Astrocyte of the cerebellum (primary cell): ENCODE measurements at regions of chr20 and their contacts with region 1.

Region 1: GRCh38 chr20:49846206-49846807 is 33.7 kb downstream of the SLC9A8 start:
- DNase-seq: peak; percentile 43
- H3K4me3 ChIP-seq: no peak overlapping the region
- CTCF ChIP-seq: peak; percentile 59

Region 2: DNA sequence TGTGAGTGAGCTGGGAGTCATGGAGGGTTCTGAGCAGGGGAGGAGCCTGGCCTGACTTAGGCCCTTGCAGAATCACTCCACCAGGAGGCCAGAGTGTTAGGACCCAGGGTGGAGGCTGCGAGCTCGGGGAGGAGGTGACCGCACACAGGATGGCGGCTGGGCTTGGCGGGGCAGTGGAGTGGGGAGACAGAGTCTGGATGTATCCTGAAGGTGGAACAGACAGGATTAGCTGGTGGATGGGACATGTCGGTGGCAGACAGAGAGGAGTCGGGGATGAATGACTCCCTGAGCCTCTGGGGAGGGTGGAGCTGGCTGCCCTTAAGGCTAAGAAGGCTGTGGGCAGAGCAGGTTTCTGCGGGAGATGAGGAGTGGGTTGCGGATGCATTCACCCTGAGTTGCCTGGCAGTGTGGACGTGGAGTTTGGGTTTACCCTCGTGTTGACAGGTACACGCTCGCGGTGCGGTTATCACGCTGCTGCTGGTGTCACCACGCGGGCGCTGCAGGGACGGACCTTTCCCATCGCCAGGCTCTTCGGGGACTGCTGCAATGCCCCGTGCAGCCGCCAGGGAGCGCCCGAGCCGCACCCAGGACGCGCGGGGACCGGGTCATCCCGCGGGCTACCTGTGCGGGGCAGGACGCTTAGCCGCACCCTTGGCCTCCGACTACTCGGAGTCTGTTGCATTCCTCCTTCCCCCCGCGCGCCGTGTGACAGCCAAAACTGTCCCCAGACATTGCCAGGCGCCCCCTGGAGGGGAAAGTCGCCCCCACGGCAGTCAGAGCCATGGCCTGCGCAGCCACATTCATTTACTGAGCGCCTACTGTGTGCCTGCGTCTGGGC is 235.4 kb before region 1 on chr20:
- in situ Hi-C with region 1: loop called (anchors 25 kb)
- DNase-seq: no peak
- H3K4me3 ChIP-seq: no peak overlapping the region
- CTCF ChIP-seq: peak; percentile 96

Region 3: GRCh38 chr20:49641683-49642656 is 204.3 kb before region 1 on chr20:
- in situ Hi-C with region 1: no loop called
- DNase-seq: no peak
- H3K4me3 ChIP-seq: no peak overlapping the region
- CTCF ChIP-seq: no peak

Region 4: GRCh38 chr20:49758781-49759180 is 87.5 kb before region 1 on chr20:
- in situ Hi-C with region 1: no loop called
- DNase-seq: no peak
- H3K4me3 ChIP-seq: no peak overlapping the region
- CTCF ChIP-seq: no peak

Region 5: DNA sequence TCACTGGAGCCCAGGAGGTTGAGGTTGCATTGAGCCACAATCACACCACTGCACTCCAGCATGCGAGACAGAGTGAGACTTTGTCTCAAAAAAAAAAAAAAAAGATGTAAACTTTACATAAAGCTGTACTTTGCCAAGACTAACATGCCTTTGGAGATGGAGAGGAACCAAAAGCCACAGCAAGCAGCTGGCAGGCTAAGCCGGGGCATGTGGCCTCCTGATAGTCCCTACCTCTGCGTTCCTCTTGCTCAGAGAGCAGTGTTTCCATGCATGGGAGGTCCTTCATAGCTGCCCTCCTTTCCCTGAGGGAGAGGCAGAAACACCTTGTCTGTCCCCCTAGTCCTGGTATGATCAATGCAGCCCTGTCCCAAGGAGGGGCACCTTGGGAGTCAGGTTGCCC is 33.9 kb after region 1 on chr20:
- in situ Hi-C with region 1: loop called (anchors 5 kb)
- DNase-seq: peak; percentile 47
- H3K4me3 ChIP-seq: no peak overlapping the region
- CTCF ChIP-seq: no peak

Region 6: GRCh38 chr20:49915378-49916145 is 69.3 kb after region 1 on chr20 and contains the start of gene SPATA2:
- in situ Hi-C with region 1: no loop called
- DNase-seq: peak; percentile 89
- H3K4me3 ChIP-seq: peak within 1 kb of the TSS; percentile 95
- CTCF ChIP-seq: no peak